ENCODE measurements at regions of chr21 and their contacts with region 1.

Region 1: DNA sequence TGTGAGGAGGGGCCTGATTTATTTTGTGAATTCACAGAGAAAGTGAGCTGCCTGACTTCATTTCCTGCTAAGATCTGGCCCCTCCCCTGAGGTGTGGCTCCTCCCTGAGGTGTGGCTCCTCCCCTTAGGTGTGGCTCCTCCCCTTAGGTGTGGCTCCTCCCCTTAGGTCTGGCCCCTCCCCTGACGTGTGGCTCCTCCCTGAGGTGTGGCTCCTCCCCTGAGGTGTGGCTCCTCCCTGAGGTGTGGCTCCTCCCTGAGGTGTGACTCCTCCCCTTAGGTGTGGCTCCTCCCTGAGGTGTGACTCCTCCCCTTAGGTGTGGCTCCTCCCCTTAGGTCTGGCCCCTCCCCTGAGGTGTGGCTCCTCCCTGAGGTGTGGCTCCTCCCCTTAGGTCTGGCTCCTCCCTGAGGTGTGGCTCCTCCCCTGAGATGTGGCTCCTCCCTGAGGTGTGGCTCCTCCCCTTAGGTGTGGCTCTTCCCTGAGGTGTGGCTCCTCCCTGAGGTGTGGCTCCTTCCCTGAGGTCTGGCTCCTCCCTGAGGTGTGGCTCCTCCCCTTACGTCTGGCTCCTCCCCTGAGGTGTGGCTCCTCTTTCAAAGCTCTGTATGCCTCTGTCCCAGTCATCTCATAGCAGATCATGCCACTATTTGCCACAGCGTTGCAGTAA is 26.9 kb upstream of the LRRC3 start:
- DNase-seq: peak; percentile 86
- H3K4me3 ChIP-seq: no peak overlapping the region
- H3K27ac ChIP-seq: peak overlapping the region; percentile 18
- H3K4me1 ChIP-seq: peaks cover 9% of the 10 kb centered on the region
- CTCF ChIP-seq: no peak

Region 2: DNA sequence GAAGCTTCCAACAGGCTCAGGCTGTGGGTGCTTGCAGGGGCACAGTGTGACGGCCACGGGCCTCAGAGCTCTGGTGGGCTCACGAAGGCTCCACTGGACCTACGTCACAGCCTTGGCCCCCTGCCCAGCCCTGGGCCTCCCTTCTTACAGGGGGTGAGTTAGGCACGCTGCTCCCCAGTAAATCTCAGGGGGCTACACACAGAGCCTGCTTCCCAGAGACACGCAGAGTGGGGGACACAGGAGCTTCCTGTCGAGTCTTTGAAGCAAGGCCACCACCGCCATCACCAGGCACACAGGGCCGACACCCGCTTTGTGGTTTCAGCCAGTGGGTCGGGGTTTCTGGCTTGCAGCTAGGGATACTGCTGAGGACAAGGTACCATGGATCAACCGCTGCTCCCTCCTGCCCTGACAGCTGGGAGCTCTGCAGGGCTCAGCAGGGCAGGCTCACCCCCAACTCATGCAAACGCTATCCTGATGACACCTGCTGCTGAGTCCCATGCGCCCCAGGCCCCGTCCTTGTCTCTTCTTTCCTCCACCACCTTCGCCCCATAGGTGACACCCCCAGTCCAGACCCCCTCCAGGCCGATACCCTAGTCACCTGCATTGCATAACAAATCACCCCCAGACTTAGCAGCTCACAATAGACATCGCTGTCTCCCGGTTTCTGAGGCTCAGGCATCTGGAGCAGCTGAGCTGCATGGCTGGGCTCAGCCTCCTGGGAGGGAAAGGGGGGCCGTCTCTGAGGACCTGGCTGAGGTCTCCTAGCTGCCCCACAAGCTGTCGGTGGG is 83.7 kb before region 1 on chr21:
- CTCF ChIA-PET with region 1: no interaction called
- POLR2A ChIA-PET with region 1: interaction called, 5 read pairs
- intact Hi-C with region 1: loop called (anchors 5 kb)
- DNase-seq: no peak
- H3K4me3 ChIP-seq: no peak overlapping the region
- H3K27ac ChIP-seq: no peak overlapping the region
- H3K4me1 ChIP-seq: peaks cover 9% of the 10 kb centered on the region
- CTCF ChIP-seq: no peak

Region 3: GRCh38 chr21:44455524-44456213 is 27.3 kb after region 1 on chr21:
- CTCF ChIA-PET with region 1: no interaction called
- POLR2A ChIA-PET with region 1: no interaction called
- intact Hi-C with region 1: no loop called
- DNase-seq: no peak
- H3K4me3 ChIP-seq: no peak overlapping the region
- H3K27ac ChIP-seq: no peak overlapping the region
- H3K4me1 ChIP-seq: no peaks in the 10 kb centered on the region
- CTCF ChIP-seq: no peak

Region 4: DNA sequence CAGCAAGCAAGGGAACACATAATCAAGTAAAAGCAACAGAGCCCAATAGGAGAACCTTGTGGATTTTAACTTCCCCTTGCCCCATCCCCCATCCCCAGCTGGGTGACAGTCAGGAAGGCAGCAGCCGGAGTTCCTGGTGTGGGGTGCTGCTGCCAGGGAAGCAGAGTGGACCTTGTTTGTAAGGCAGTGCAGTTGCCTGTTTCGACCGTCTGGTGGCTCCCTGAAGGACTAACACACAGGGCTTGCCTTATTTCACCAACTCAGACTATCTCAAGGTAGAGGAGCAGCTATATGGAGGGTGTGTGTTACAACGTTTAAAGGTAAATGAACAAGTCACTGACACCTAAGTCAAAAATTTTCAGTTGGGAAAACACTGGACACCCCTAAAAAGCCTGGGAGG is 190.1 kb after region 1 on chr21:
- CTCF ChIA-PET with region 1: no interaction called
- POLR2A ChIA-PET with region 1: no interaction called
- intact Hi-C with region 1: no loop called
- DNase-seq: peak; percentile 5
- H3K4me3 ChIP-seq: no peak overlapping the region
- H3K27ac ChIP-seq: no peak overlapping the region
- H3K4me1 ChIP-seq: peaks cover 12% of the 10 kb centered on the region
- CTCF ChIP-seq: no peak